GM12878 (cell line): ENCODE measurements at regions of chr3 and their contacts with region 1.

Region 1: DNA sequence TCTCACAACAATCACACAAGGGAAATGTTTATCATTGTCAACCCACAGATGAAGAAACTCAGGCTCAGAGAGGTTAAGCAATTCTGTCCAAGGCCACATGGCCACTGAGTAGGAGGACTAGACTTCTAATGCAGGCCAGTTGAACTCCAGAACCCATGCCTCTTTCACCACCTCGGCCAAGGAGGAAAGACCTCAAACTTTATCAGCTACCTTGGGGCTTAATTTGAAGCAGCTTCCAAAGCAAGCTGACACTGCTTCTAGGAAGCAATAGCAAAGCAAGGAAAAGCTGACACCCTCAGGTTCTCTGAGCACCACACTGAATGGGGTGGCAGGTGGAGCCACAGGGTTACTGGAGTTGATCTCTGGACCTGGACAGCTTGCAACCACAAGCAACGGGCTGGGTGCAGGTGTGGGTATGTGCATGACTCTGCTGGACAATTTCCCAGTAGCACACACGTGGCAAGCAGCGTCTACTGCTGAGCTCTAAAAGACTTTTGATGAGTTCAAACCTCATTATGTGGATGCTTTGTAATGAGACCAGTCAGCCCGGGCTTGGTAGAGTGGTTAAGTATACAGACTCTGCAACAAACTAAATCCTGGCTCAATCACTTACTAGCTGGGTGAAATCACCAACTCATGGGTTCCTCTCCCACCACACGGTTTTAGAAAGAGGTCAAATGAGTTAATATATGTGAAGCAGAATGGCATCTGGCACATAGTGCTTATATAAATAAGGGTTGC is 23.1 kb downstream of the CCNL1 start:
- DNase-seq: no peak
- ATAC-seq: no peak; the same call in 1 of the 3 replicates
- H3K4me3 ChIP-seq: no peak overlapping the region
- H3K27ac ChIP-seq: no peak overlapping the region
- H3K4me1 ChIP-seq: peaks cover 10% of the 10 kb centered on the region
- H3K27me3 ChIP-seq: no peaks in the 10 kb centered on the region
- CTCF ChIP-seq: no peak
- EP300 ChIP-seq: no peak
- POLR2A ChIP-seq: no peak
- RAD21 ChIP-seq: no peak

Region 2: DNA sequence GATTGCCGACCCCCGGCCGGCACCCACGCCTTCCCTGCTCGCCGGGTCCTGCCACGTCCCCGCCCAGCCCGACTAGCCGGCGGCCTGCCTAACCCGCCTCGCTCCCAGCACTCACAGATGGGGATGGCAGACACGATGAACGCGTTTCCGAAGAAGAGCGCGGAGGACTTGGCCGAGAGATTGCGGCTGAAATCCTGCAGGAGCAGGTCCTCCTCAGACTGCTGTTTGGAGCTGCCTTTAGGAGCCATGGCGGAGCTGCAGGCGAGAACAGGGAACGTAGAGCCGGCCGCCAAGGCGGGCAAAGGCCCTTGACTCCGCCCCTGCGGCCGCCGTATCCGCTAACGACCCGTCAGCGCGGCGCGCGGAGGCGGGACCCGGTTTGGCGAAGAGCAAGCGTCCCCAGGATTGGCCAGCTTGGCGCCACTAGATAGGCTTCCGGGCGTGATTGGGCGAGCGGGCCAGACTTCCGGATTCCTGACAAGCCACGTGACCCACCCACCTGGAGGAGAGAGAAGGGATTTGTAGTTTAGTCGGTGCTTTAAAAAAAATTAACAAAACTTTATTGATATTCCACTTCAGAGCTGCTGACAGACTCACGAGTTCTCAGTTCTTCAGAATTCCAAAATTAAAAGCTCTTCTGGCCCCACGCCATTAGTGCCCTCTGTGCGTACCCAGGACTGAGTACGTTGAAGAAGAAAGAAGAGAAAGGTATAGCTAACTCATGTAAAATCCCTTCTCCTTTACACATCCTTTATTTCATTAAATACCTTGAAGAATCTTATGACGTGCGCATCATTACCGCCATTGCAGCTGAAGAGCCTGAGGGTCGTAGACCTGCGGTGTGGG is 581.8 kb before region 1 on chr3 and contains the start of gene SSR3:
- CTCF ChIA-PET with region 1: interaction called, 9 read pairs
- POLR2A ChIA-PET with region 1: no interaction called
- RAD21 ChIA-PET with region 1: interaction called, 4 read pairs
- SMC1A ChIA-PET with region 1: interaction called, 4 read pairs
- in situ Hi-C with region 1: no loop called
- intact Hi-C with region 1: loop called (anchors 5 kb)
- DNase-seq: peak; percentile 95
- ATAC-seq: peak; percentile 99
- H3K4me3 ChIP-seq: peak within 1 kb of the TSS; percentile 92
- H3K27ac ChIP-seq: peak within 1 kb of the TSS; percentile 83
- H3K4me1 ChIP-seq: peaks cover 2% of the 10 kb centered on the region; the same call in 1 of the 2 replicates
- H3K27me3 ChIP-seq: no peaks in the 10 kb centered on the region
- CTCF ChIP-seq: peak in 1 of 3 experiments; percentile 2; a peak in 1 of 6 replicates
- EP300 ChIP-seq: no peak; a peak in 1 of 4 replicates
- POLR2A ChIP-seq: peak; percentile 95
- RAD21 ChIP-seq: no peak
- polyA plus RNA-seq, gene SSR3: 278 to 345 TPM

Region 3: DNA sequence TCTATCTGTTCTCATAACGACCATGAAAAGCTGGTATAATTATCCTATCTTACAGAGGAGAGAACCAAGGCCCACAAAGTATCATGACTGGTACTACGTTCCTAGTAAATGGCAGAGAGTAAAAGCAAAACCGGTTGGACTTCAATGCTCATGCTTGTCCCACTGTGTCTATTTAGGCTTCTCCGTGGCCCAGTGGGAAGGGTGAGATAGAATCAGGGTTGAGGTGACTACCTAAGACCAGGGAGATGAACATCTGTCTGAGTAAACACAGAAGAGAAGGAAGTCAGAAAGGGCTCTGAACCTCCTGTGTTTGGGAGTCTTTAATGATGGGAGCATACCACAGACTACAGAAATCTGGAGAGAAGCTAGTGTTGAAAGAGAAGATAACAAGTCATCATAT is 193.4 kb before region 1 on chr3:
- CTCF ChIA-PET with region 1: no interaction called
- POLR2A ChIA-PET with region 1: no interaction called
- RAD21 ChIA-PET with region 1: no interaction called
- SMC1A ChIA-PET with region 1: no interaction called
- in situ Hi-C with region 1: no loop called
- intact Hi-C with region 1: no loop called
- DNase-seq: no peak
- ATAC-seq: no peak
- H3K4me3 ChIP-seq: no peak overlapping the region
- H3K27ac ChIP-seq: no peak overlapping the region
- H3K4me1 ChIP-seq: no peaks in the 10 kb centered on the region
- H3K27me3 ChIP-seq: no peaks in the 10 kb centered on the region
- CTCF ChIP-seq: no peak
- EP300 ChIP-seq: no peak
- POLR2A ChIP-seq: no peak
- RAD21 ChIP-seq: no peak

Region 4: GRCh38 chr3:157148196-157148889 is 11.5 kb after region 1 on chr3:
- CTCF ChIA-PET with region 1: interaction called, 46 read pairs
- POLR2A ChIA-PET with region 1: no interaction called
- RAD21 ChIA-PET with region 1: interaction called, 3 read pairs
- SMC1A ChIA-PET with region 1: interaction called, 8 read pairs
- in situ Hi-C with region 1: no loop called
- intact Hi-C with region 1: no loop called
- DNase-seq: no peak
- ATAC-seq: peak; percentile 45
- H3K4me3 ChIP-seq: no peak overlapping the region
- H3K27ac ChIP-seq: no peak overlapping the region
- H3K4me1 ChIP-seq: no peaks in the 10 kb centered on the region; the same call in 1 of the 2 replicates
- H3K27me3 ChIP-seq: no peaks in the 10 kb centered on the region
- CTCF ChIP-seq: no peak
- EP300 ChIP-seq: 0 out of 4 replicates have a peak, but pooled peaks of 1 of the 2 experiments have one; percentile 36
- POLR2A ChIP-seq: peak; percentile 67
- RAD21 ChIP-seq: no peak

Region 5: GRCh38 chr3:157159762-157160657 is 23.2 kb after region 1 on chr3 and contains the start of gene CCNL1:
- CTCF ChIA-PET with region 1: interaction called, 19 read pairs
- POLR2A ChIA-PET with region 1: no interaction called
- RAD21 ChIA-PET with region 1: interaction called, 4 read pairs
- SMC1A ChIA-PET with region 1: interaction called, 14 read pairs
- in situ Hi-C with region 1: no loop called
- intact Hi-C with region 1: no loop called
- DNase-seq: peak; percentile 82
- ATAC-seq: peak; percentile 88
- H3K4me3 ChIP-seq: peak within 1 kb of the TSS; percentile 72
- H3K27ac ChIP-seq: peak within 1 kb of the TSS; percentile 99
- H3K4me1 ChIP-seq: peaks cover 11% of the 10 kb centered on the region; the same call in 1 of the 2 replicates
- H3K27me3 ChIP-seq: no peaks in the 10 kb centered on the region
- CTCF ChIP-seq: no peak
- EP300 ChIP-seq: peak; percentile 49 to 66; a peak in 2 of 4 replicates
- POLR2A ChIP-seq: peak; percentile 98
- RAD21 ChIP-seq: no peak; the same call in 1 of the 2 replicates
- polyA plus RNA-seq, gene CCNL1: 22.2 to 39.8 TPM

Region 6: DNA sequence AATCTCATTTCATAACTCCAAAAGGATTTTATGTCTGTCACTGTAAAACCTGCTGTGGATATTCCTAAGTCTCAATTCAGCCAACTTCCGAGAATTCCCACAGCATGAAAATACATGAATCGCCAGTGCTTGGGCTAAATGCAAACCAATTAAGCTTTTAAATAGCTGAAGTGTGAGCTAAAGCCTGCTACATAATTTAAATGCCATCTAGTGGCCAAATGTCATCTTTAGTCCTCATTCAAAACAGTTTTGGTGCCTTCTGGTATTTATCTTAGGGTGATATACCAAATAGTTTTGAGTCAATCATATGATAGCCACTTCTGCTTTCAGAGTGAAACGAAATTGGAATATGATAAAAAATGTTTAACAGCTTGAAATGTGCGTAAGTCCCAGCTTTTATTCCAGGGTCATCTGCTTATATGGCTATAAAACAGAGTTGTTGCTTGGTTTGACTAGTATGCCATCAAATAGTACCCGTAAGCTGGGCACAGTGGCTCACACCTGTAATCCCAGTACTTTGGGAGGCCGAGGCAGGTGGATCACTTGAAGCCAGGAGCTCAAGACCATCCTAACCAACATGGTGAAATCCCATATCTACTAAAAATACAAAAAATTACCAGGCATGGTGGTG is 64.9 kb after region 1 on chr3:
- CTCF ChIA-PET with region 1: interaction called, 13 read pairs
- POLR2A ChIA-PET with region 1: no interaction called
- RAD21 ChIA-PET with region 1: interaction called, 6 read pairs
- SMC1A ChIA-PET with region 1: interaction called, 3 read pairs
- in situ Hi-C with region 1: no loop called
- intact Hi-C with region 1: no loop called
- DNase-seq: no peak
- ATAC-seq: peak; percentile 93
- H3K4me3 ChIP-seq: no peak overlapping the region
- H3K27ac ChIP-seq: no peak overlapping the region
- H3K4me1 ChIP-seq: no peaks in the 10 kb centered on the region
- H3K27me3 ChIP-seq: no peaks in the 10 kb centered on the region
- CTCF ChIP-seq: peak; percentile 53 to 63 (median 60); a peak in 5 of 6 replicates
- EP300 ChIP-seq: no peak
- POLR2A ChIP-seq: no peak
- RAD21 ChIP-seq: peak; percentile 59